CD4-positive, alpha-beta memory T cell (primary cell): ENCODE measurements at regions of chr11 and their contacts with region 1.

Region 1: GRCh38 chr11:18526521-18527296 is at the start of gene TSG101:
- DNase-seq: peak; percentile 91 to 94 (median 92)
- H3K4me3 ChIP-seq: peak within 1 kb of the TSS; percentile 70 to 72
- H3K4me3 Mint-ChIP-seq: peak within 1 kb of the TSS; percentile 99 to 100 (median 100)
- H3K27ac ChIP-seq: peak within 1 kb of the TSS; percentile 99
- H3K27ac Mint-ChIP-seq: peak within 1 kb of the TSS; percentile 100
- H3K4me1 ChIP-seq: peaks cover 38% of the 10 kb centered on the region
- H3K4me1 Mint-ChIP-seq: peaks cover 32 to 57% (median 42%) of the 10 kb centered on the region in 4 donors
- H3K27me3 ChIP-seq: no peaks in the 10 kb centered on the region
- H3K27me3 Mint-ChIP-seq: no peaks in the 10 kb centered on the region
- total RNA-seq, gene TSG101: 40.0 to 41.2 TPM

Region 2: GRCh38 chr11:18105802-18106574 is 420.7 kb before region 1 on chr11 and contains the start of gene SAAL1:
- CTCF ChIA-PET with region 1: interaction called, 3 read pairs
- POLR2A ChIA-PET with region 1: interaction called, 7 read pairs
- intact Hi-C with region 1: loop called (anchors 1 kb)
- DNase-seq: peak; percentile 79 to 84 (median 83)
- H3K4me3 ChIP-seq: peak within 1 kb of the TSS; percentile 92 to 95
- H3K4me3 Mint-ChIP-seq: peak within 1 kb of the TSS; percentile 90 to 98 (median 94)
- H3K27ac ChIP-seq: peak within 1 kb of the TSS; percentile 56
- H3K27ac Mint-ChIP-seq: peak within 1 kb of the TSS; percentile 65 to 94 (median 92)
- H3K4me1 ChIP-seq: peaks cover 21% of the 10 kb centered on the region
- H3K4me1 Mint-ChIP-seq: peaks cover 22 to 50% (median 29%) of the 10 kb centered on the region in 4 donors
- H3K27me3 ChIP-seq: no peaks in the 10 kb centered on the region
- H3K27me3 Mint-ChIP-seq: peaks cover 1 to 7% of the 10 kb centered on the region in 2 donors
- total RNA-seq, gene SAAL1: 18.4 to 21.2 TPM

Region 3: GRCh38 chr11:18321980-18322711 is 204.6 kb before region 1 on chr11 and contains the starts of genes GTF2H1 and HPS5:
- CTCF ChIA-PET with region 1: interaction called, 3 read pairs
- POLR2A ChIA-PET with region 1: interaction called, 30 read pairs
- intact Hi-C with region 1: loop called (anchors 1 kb)
- DNase-seq: peak; percentile 97 to 99 (median 98)
- H3K4me3 ChIP-seq: peak within 1 kb of the TSS; percentile 72 to 93
- H3K4me3 Mint-ChIP-seq: peak within 1 kb of the TSS; percentile 96 to 99 (median 98)
- H3K27ac ChIP-seq: peak within 1 kb of the TSS; percentile 99
- H3K27ac Mint-ChIP-seq: peak within 1 kb of the TSS; percentile 99 to 100 (median 100)
- H3K4me1 ChIP-seq: peaks cover 65% of the 10 kb centered on the region
- H3K4me1 Mint-ChIP-seq: peaks cover 50 to 86% (median 66%) of the 10 kb centered on the region in 4 donors
- H3K27me3 ChIP-seq: no peaks in the 10 kb centered on the region
- H3K27me3 Mint-ChIP-seq: no peaks in the 10 kb centered on the region
- total RNA-seq, gene GTF2H1: 60.1 to 61.6 TPM
- total RNA-seq, gene HPS5: 22.1 to 23.7 TPM

Region 4: DNA sequence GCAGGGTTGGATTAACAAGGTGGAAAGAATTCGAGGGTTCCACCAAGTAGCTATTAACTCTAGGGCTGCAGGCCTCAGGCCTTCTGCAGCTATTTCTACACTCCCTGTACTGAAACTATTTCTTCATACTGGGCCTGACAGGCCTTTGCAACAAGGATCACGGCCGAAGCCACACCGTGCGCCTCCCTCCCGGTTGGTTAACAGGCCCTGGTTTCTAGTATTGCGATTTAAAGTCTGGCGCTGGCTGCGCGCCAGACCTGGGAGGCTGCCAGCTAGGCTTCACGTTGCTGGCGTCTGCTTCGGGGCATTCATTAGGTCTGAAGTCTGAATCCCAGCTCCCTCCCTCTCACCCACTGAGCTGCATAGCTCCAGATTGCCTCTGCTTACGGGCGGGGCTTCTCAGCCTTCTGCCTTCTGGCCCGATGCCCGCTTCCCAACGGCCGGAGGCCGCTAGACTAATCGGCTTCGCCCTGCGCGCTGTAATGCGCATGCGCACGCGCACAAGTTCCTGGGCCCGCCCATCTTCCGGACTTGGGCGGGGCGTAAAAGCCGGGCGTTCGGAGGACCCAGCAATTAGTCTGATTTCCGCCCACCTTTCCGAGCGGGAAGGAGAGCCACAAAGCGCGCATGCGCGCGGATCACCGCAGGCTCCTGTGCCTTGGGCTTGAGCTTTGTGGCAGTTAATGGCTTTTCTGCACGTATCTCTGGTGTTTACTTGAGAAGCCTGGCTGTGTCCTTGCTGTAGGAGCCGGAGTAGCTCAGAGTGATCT is 130.8 kb before region 1 on chr11:
- CTCF ChIA-PET with region 1: interaction called, 12 read pairs
- POLR2A ChIA-PET with region 1: interaction called, 55 read pairs
- intact Hi-C with region 1: loop called (anchors 1 kb)
- DNase-seq: peak; percentile 94 to 98 (median 97)
- H3K4me3 ChIP-seq: peak overlapping the region; percentile 72 to 98
- H3K4me3 Mint-ChIP-seq: peak overlapping the region; percentile 98 to 99 (median 98)
- H3K27ac ChIP-seq: peak overlapping the region; percentile 88
- H3K27ac Mint-ChIP-seq: peak overlapping the region; percentile 97 to 99 (median 98)
- H3K4me1 ChIP-seq: peaks cover 43% of the 10 kb centered on the region
- H3K4me1 Mint-ChIP-seq: peaks cover 17 to 71% (median 29%) of the 10 kb centered on the region in 4 donors
- H3K27me3 ChIP-seq: no peaks in the 10 kb centered on the region
- H3K27me3 Mint-ChIP-seq: peaks cover 0 to 2% of the 10 kb centered on the region in 2 donors

Region 5: GRCh38 chr11:18588297-18589252 is 61.9 kb after region 1 on chr11 and contains the start of gene UEVLD:
- CTCF ChIA-PET with region 1: no interaction called
- POLR2A ChIA-PET with region 1: interaction called, 16 read pairs
- intact Hi-C with region 1: loop called (anchors 1 kb)
- DNase-seq: peak; percentile 45 to 72 (median 48)
- H3K4me3 ChIP-seq: peak within 1 kb of the TSS; percentile 8 to 56
- H3K4me3 Mint-ChIP-seq: no peak within 1 kb of the TSS
- H3K27ac ChIP-seq: peak within 1 kb of the TSS; percentile 91
- H3K27ac Mint-ChIP-seq: no peak within 1 kb of the TSS
- H3K4me1 ChIP-seq: peaks cover 48% of the 10 kb centered on the region
- H3K4me1 Mint-ChIP-seq: peaks cover 0 to 13% (median 11%) of the 10 kb centered on the region in 4 donors
- H3K27me3 ChIP-seq: no peaks in the 10 kb centered on the region
- H3K27me3 Mint-ChIP-seq: no peaks in the 10 kb centered on the region
- total RNA-seq, gene UEVLD: 10.6 to 10.7 TPM

Region 6: GRCh38 chr11:18698341-18699268 is 171.9 kb after region 1 on chr11 and contains the start of gene TMEM86A:
- CTCF ChIA-PET with region 1: no interaction called
- POLR2A ChIA-PET with region 1: interaction called, 6 read pairs
- intact Hi-C with region 1: loop called (anchors 1 kb)
- DNase-seq: peak; percentile 87 to 91 (median 88)
- H3K4me3 ChIP-seq: peak within 1 kb of the TSS in 1 of 2 donors; percentile 64
- H3K4me3 Mint-ChIP-seq: peak within 1 kb of the TSS; percentile 79 to 88 (median 84)
- H3K27ac ChIP-seq: peak within 1 kb of the TSS; percentile 63
- H3K27ac Mint-ChIP-seq: peak within 1 kb of the TSS; percentile 64 to 95 (median 92)
- H3K4me1 ChIP-seq: peaks cover 15% of the 10 kb centered on the region
- H3K4me1 Mint-ChIP-seq: peaks cover 12 to 22% (median 17%) of the 10 kb centered on the region in 4 donors
- H3K27me3 ChIP-seq: no peaks in the 10 kb centered on the region
- H3K27me3 Mint-ChIP-seq: no peaks in the 10 kb centered on the region
- total RNA-seq, gene TMEM86A: 2.5 to 4.0 TPM

Region 7: DNA sequence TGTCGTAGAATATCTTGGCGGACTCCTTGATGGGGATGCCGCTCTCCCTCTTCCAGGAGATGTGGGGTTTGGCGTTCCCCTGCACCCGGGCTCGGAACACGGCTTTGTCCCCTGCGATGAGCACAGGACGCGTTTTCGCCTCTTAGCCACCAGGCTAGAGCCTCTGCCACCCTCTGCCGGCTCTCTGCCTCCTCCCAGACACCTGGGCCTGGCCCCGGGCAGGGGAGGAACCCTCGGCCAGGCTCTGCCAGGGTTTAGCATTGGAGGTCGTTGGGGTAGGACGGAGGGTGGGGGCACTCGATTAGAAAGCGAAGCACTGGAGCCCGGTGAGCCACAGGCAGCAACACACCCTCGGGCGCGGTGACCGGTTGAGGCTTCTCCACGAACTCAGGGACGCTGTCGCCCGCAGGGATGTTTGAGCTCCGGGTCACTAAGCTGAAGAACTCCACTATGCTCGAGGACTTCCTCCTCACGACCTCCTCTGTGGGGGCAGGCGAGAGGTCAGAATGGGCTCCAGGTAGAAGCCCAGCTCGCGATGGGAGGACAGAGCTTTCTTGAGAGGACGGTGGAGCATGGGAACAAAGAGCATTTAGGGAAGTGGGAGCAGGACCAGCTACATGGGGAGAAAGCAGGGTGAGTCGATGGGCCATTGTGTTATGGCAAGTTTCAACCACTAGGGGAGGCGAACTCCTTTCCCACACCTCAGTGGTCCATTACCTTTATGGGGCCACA is 195.0 kb after region 1 on chr11:
- CTCF ChIA-PET with region 1: interaction called, 13 read pairs
- POLR2A ChIA-PET with region 1: interaction called, 14 read pairs
- intact Hi-C with region 1: loop called (anchors 2 kb)
- DNase-seq: peak; percentile 36 to 60 (median 53)
- H3K4me3 ChIP-seq: peak overlapping the region; percentile 77 to 81
- H3K4me3 Mint-ChIP-seq: peak overlapping the region; percentile 87 to 96 (median 92)
- H3K27ac ChIP-seq: peak overlapping the region; percentile 56
- H3K27ac Mint-ChIP-seq: peak overlapping the region; percentile 47 to 92 (median 81)
- H3K4me1 ChIP-seq: peaks cover 5% of the 10 kb centered on the region
- H3K4me1 Mint-ChIP-seq: peaks cover 4 to 13% (median 7%) of the 10 kb centered on the region in 4 donors
- H3K27me3 ChIP-seq: no peaks in the 10 kb centered on the region
- H3K27me3 Mint-ChIP-seq: no peaks in the 10 kb centered on the region